Caco-2 (cell line): ENCODE measurements at regions of chr10 and their contacts with region 1.

Region 1: GRCh38 chr10:97292097-97292862 is at the start of gene ARHGAP19:
- DNase-seq: peak; percentile 97 to 98
- H3K4me3 ChIP-seq: peak within 1 kb of the TSS; percentile 97
- H3K4me3 Mint-ChIP-seq: peak within 1 kb of the TSS; percentile 94
- H3K27ac Mint-ChIP-seq: peak within 1 kb of the TSS; percentile 91
- H3K4me1 ChIP-seq: peaks cover 7% of the 10 kb centered on the region
- H3K4me1 Mint-ChIP-seq: peaks cover 6% of the 10 kb centered on the region
- H3K27me3 ChIP-seq: no peaks in the 10 kb centered on the region
- H3K27me3 Mint-ChIP-seq: no peaks in the 10 kb centered on the region
- CTCF ChIP-seq: peak in 1 of 2 experiments; percentile 42
- total RNA-seq, gene ARHGAP19: 13.9 and 15.9 TPM in 2 replicates

Region 2: GRCh38 chr10:97278491-97278989 is 13.7 kb before region 1 on chr10:
- CTCF ChIA-PET with region 1: interaction called, 14 read pairs
- POLR2A ChIA-PET with region 1: no interaction called
- intact Hi-C with region 1: no loop called
- DNase-seq: peak in 1 of 2 experiments; percentile 21
- H3K4me3 ChIP-seq: no peak overlapping the region
- H3K4me3 Mint-ChIP-seq: no peak overlapping the region
- H3K27ac Mint-ChIP-seq: no peak overlapping the region
- H3K4me1 ChIP-seq: 0 out of 2 replicates have a peak, but pooled peaks cover 4% of the 10 kb centered on the region
- H3K4me1 Mint-ChIP-seq: no peaks in the 10 kb centered on the region
- H3K27me3 ChIP-seq: no peaks in the 10 kb centered on the region
- H3K27me3 Mint-ChIP-seq: no peaks in the 10 kb centered on the region
- CTCF ChIP-seq: peak; percentile 54 to 59

Region 3: DNA sequence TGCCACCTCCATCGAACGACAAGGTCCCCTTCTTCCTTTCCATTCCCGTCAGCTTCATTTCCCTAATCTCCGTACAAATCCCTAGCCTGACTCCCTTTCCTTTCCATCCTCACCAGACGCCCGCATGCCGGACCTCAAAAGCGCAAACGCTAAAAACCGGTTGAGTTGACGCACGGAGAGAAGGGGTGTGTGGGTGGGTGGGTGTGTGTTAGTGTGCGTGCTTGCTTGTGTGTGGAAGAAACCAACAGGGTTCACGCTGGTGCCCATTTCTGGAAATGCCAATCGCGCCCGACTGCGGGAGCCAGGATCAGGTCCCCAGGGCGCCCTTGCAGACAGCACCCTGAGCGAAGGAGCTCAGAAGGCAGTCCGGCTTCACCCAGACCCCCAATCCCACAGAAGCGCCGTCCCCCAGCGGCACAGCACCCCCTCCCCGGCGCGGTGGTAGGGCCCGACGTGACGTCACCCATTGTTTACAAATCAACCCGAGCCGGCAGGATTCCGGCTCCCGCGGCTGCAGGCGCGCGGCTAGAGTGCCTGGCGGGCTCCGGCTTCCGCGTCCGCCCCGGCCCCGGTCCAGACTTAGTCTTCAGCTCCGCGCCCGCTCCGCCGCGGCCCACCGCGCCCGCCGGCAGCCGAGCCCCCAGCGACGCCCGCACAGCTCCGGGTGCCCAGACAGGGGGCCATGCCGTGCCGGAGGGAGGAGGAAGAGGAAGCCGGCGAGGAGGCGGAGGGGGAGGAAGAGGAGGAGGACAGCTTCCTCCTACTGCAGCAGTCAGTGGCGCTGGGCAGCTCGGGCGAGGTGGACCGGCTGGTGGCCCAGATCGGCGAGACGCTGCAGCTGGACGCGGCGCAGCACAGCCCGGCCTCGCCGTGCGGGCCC is 26.7 kb after region 1 on chr10 and contains the start of gene FRAT1:
- CTCF ChIA-PET with region 1: no interaction called
- POLR2A ChIA-PET with region 1: interaction called, 4 read pairs
- intact Hi-C with region 1: loop called (anchors 1 kb)
- DNase-seq: peak; percentile 89 to 92
- H3K4me3 ChIP-seq: peak within 1 kb of the TSS; percentile 94
- H3K4me3 Mint-ChIP-seq: peak within 1 kb of the TSS; percentile 86
- H3K27ac Mint-ChIP-seq: peak within 1 kb of the TSS; percentile 99
- H3K4me1 ChIP-seq: peaks cover 4% of the 10 kb centered on the region
- H3K4me1 Mint-ChIP-seq: peaks cover 7% of the 10 kb centered on the region
- H3K27me3 ChIP-seq: no peaks in the 10 kb centered on the region
- H3K27me3 Mint-ChIP-seq: peaks cover 3% of the 10 kb centered on the region
- CTCF ChIP-seq: no peak
- total RNA-seq, gene FRAT1: 2.3 and 2.9 TPM in 2 replicates

Region 4: DNA sequence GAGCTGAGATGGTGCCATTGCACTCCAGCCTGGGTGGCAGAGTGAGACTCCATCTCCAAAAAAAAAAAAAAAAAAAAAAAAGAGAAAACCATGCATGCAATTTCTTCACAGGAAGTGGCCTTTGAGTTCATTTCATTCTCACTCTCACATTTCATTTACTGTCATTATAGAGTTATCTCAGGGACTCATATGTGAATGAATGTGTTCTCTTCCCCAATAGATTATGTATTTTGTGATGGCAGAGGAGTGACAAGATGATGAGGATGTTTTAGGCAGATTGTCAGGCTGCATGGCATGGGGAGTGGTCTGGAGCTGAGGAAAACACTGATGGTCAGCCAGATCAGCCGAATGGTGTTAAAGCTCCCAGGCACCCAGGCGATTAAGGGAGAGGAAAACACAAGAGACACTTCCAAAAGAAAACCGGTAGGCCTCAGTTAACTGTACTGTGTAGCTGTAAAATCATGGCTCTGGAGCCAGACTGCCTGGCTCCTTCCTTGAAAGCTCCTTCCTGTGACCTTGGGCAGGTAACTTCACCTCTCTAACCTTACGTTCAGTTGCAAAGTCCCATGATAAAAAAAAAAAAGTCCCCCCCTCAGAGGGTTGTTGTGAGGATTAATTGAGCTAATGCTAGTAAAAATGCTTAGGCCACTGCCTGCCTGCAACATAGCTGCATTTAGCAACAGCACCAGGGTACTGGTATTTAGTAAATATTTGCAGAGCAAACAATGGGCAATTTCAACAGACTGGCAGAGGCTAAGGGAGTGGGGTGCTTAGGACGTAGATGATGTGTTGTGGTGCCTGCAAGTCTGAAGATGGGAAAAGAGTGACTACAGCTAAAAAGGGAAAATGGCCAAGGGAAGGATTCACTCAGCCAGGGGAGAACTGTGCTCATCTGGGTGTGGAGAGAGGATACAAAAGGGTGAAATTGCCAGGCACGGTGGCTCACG is 35.3 kb after region 1 on chr10:
- CTCF ChIA-PET with region 1: no interaction called
- POLR2A ChIA-PET with region 1: no interaction called
- intact Hi-C with region 1: loop called (anchors 2 kb)
- DNase-seq: peak; percentile 43 to 54
- H3K4me3 ChIP-seq: no peak overlapping the region
- H3K4me3 Mint-ChIP-seq: no peak overlapping the region
- H3K27ac Mint-ChIP-seq: peak overlapping the region; percentile 17
- H3K4me1 ChIP-seq: peaks cover 26% of the 10 kb centered on the region
- H3K4me1 Mint-ChIP-seq: peaks cover 28% of the 10 kb centered on the region
- H3K27me3 ChIP-seq: no peaks in the 10 kb centered on the region
- H3K27me3 Mint-ChIP-seq: no peaks in the 10 kb centered on the region
- CTCF ChIP-seq: no peak

Region 5: DNA sequence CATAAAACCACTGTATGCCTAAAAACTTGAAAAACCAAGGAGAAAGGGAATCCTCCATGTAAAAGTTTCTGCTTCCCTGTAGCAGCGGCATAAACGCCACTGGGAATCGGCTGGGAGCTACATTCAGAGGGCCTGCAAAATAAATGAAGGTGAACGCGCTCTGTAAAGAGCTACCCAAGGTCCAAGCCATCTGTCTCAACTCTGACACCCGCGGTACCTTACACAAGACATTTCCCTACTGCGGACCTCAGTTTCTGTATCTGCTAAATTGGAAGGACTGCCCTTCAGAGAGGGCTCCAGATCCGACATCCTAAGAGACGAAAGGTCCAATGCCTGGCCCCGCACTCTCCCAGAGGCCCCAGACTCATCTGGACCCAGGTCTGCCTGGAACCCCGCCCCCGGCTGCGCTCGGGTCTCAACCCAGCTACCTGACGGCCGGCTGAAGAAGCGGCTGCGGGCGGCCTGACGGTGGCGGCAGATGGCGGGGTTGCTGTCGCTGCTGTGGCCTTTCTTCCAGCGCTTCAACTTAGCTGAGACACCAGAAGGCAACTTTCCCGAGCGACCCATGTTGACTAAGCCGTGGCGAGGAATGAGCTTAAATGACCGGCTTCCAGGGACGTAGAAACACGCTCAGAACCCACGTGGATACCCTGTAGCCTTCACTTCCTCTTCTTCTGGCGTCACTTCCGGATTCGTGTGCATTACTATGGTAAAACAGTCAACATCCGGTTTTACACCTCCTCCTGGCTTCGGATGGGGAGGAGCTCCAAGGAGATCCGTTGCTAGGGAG is 108.6 kb after region 1 on chr10 and contains the start of gene RRP12:
- CTCF ChIA-PET with region 1: no interaction called
- POLR2A ChIA-PET with region 1: interaction called, 8 read pairs
- intact Hi-C with region 1: loop called (anchors 1 kb)
- DNase-seq: peak; percentile 93 to 94
- H3K4me3 ChIP-seq: peak within 1 kb of the TSS; percentile 89
- H3K4me3 Mint-ChIP-seq: peak within 1 kb of the TSS; percentile 92
- H3K27ac Mint-ChIP-seq: peak within 1 kb of the TSS; percentile 95
- H3K4me1 ChIP-seq: no peaks in the 10 kb centered on the region
- H3K4me1 Mint-ChIP-seq: no peaks in the 10 kb centered on the region
- H3K27me3 ChIP-seq: no peaks in the 10 kb centered on the region
- H3K27me3 Mint-ChIP-seq: no peaks in the 10 kb centered on the region
- CTCF ChIP-seq: peak in 1 of 2 experiments; percentile 39
- total RNA-seq, gene RRP12: 69.3 and 70.5 TPM in 2 replicates